Esophagus muscularis mucosa (tissue), 4 donors: ENCODE measurements at regions of chr6 and their contacts with region 1.

Region 1: DNA sequence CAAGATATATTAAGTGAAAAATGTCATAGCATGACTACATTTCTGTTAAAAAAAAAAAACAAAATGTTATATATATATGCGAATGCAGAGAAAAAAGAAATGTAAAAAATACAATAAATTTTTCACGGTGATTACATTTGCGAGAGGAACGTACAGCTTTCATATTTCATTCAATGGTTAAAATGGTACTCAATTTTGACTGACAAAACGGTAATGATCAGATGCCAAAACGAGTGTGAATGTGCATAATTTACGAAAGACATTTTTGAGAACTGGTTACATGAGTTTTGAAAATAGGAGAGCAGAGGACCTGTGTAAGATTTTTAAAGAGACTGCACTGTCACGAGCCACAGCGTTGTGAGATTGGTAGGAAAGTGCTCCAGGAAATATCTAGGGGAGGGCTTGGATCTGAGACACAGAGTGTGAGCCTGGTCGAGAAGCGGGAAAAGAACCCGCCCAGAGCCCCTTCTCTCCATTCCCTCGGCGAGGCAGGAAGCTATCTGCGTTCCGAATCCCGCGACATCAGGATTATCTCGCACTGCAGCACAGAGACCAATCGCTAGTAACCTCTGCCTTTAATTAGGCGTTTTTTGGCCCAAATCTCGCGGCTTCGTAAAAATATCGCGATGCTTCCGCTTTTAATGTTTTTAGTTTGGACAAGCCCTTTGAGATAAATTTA is 28.5 kb downstream of the TRIM27 start:
- DNase-seq: peak; percentile 98
- H3K4me3 ChIP-seq: peak overlapping the region; percentile 63 to 68 (median 66)
- H3K27ac ChIP-seq: peak overlapping the region; percentile 89 to 98 (median 96)
- H3K4me1 ChIP-seq: peaks cover 0 to 16% (median 14%) of the 10 kb centered on the region in 4 donors
- H3K27me3 ChIP-seq: no peaks in the 10 kb centered on the region
- CTCF ChIP-seq: peak in 1 of 3 experiments; percentile 7
- EP300 ChIP-seq: no peak
- POLR2A ChIP-seq: peak; percentile 19

Region 2: GRCh38 chr6:28923318-28924102 is 28.2 kb after region 1 on chr6 and contains the start of gene TRIM27:
- intact Hi-C with region 1: loop called (anchors 2 kb)
- DNase-seq: peak; percentile 97
- H3K4me3 ChIP-seq: peak within 1 kb of the TSS; percentile 73 to 96 (median 84)
- H3K27ac ChIP-seq: peak within 1 kb of the TSS; percentile 84 to 98 (median 96)
- H3K4me1 ChIP-seq: peaks cover 18 to 38% (median 28%) of the 10 kb centered on the region in 4 donors
- H3K27me3 ChIP-seq: no peaks in the 10 kb centered on the region
- CTCF ChIP-seq: no peak
- EP300 ChIP-seq: no peak
- POLR2A ChIP-seq: peak; percentile 65
- total RNA-seq, gene TRIM27: 31.1 to 42.2 (median 36.0) TPM

Region 3: GRCh38 chr6:28981833-28982475 is 86.7 kb after region 1 on chr6:
- intact Hi-C with region 1: loop called (anchors 2 kb)
- DNase-seq: peak; percentile 96
- H3K4me3 ChIP-seq: peak overlapping the region; percentile 57 to 72 (median 65)
- H3K27ac ChIP-seq: peak overlapping the region; percentile 71 to 79 (median 79)
- H3K4me1 ChIP-seq: peaks cover 7 to 37% (median 30%) of the 10 kb centered on the region in 4 donors
- H3K27me3 ChIP-seq: peaks cover 0 to 12% (median 6%) of the 10 kb centered on the region in 4 donors
- CTCF ChIP-seq: no peak
- EP300 ChIP-seq: no peak
- POLR2A ChIP-seq: no peak